ENCODE measurements at regions of chr3 and their contacts with region 1.

Region 1: DNA sequence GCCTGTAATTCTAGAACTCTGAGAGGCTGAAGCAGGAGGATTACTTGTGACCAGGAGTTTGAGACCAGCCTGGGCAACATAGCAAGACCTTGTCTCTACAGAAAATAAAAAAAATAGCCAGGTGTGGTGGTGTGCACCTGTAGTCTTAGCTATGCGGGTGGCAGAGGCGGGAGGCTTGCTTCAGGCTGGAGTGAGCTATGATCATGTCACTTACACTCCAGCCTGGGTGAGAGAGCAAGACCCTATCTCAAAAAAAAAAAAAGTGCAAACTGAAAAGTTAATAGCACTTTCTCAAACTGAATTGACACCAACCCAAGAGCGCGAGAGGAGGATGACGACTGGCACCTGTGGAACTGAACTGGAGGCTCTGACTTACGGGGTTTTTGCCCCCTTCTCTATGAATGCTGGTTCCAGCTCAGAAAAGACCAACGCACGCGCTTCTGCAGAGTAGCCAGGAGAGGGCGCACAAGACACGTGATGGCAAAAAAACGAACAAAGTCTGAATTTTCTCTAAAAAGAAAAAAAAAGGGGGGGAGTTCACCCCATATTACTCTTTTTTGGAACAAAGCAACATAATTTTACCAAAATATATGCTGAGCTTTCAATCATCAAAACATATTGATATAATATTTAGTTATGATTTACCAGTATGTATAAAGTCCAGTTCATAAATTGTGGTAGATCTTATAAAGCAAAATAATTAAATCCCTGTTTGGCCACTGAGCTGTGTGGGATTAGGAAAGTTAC is 23.7 kb downstream of the CFAP92 start:
- DNase-seq: peak in 1 of 2 experiments; percentile 78
- H3K4me3 ChIP-seq: no peak overlapping the region
- H3K27ac ChIP-seq: no peak overlapping the region
- H3K4me1 ChIP-seq: no peaks in the 10 kb centered on the region
- H3K27me3 ChIP-seq: no peaks in the 10 kb centered on the region; a peak in 1 of 7 replicates
- CTCF ChIP-seq: peak; percentile 75 to 84 (median 81)
- EP300 ChIP-seq: no peak
- POLR2A ChIP-seq: no peak
- RAD21 ChIP-seq: peak; percentile 92 to 95

Region 2: GRCh38 chr3:128984596-128984995 is 14.4 kb after region 1 on chr3:
- CTCF ChIA-PET with region 1: interaction called, 51 read pairs
- POLR2A ChIA-PET with region 1: interaction called, 3 read pairs
- DNase-seq: no peak
- H3K4me3 ChIP-seq: no peak overlapping the region
- H3K27ac ChIP-seq: no peak overlapping the region
- H3K4me1 ChIP-seq: peaks cover 0 to 2% (median 0%) of the 10 kb centered on the region in 4 experiments; a peak in 3 of 7 replicates
- H3K27me3 ChIP-seq: no peaks in the 10 kb centered on the region; a peak in 1 of 7 replicates
- CTCF ChIP-seq: no peak
- EP300 ChIP-seq: no peak
- POLR2A ChIP-seq: no peak
- RAD21 ChIP-seq: no peak

Region 3: GRCh38 chr3:129016356-129016719 is 46.2 kb after region 1 on chr3:
- CTCF ChIA-PET with region 1: interaction called, 58 read pairs
- POLR2A ChIA-PET with region 1: interaction called, 7 read pairs
- DNase-seq: no peak
- H3K4me3 ChIP-seq: no peak overlapping the region
- H3K27ac ChIP-seq: no peak overlapping the region
- H3K4me1 ChIP-seq: peaks cover 0 to 7% (median 1%) of the 10 kb centered on the region in 4 experiments; a peak in 2 of 7 replicates
- H3K27me3 ChIP-seq: peaks cover 0 to 4% (median 0%) of the 10 kb centered on the region in 4 experiments; a peak in 1 of 7 replicates
- CTCF ChIP-seq: no peak
- EP300 ChIP-seq: no peak
- POLR2A ChIP-seq: no peak
- RAD21 ChIP-seq: no peak; a peak in 1 of 4 replicates

Region 4: DNA sequence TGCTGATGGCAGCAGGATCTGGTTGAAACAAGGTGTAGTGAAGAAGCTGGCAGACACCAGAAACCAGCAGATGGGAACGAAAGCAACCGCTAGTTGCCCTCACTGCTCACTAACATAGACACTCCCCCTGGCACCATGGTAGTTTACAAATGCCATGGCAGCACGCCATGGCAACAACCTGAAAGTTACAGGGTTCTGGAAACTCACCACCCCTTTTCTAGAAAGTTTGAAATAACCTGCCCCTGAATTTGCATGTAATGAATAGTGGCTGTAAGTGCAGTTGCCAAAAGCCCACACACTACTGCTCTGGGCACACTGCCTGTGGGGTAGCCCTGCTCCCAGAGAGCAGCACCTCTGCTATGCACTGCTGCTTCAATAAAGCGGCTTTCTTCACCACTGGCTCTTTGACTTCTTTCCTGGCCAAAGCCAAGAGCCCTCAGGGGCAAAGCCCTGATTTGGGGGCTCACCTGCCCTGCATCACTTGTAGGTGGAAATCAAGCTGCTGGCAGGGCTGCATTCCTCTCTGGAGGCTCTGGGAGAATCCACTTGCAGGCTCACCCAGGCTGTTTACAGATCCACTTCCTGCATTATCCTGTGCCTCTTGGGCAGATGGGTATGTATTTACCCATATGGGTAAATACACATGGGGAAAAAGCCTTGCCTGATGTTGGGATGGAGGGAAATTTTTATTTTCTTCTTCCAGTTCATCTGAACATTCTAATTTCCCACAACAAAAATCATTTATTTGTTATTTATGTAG is 88.5 kb after region 1 on chr3:
- CTCF ChIA-PET with region 1: interaction called, 79 read pairs
- POLR2A ChIA-PET with region 1: no interaction called
- DNase-seq: no peak
- H3K4me3 ChIP-seq: no peak overlapping the region
- H3K27ac ChIP-seq: no peak overlapping the region
- H3K4me1 ChIP-seq: no peaks in the 10 kb centered on the region; a peak in 1 of 7 replicates
- H3K27me3 ChIP-seq: no peaks in the 10 kb centered on the region
- CTCF ChIP-seq: no peak
- EP300 ChIP-seq: no peak
- POLR2A ChIP-seq: no peak
- RAD21 ChIP-seq: no peak

Region 5: DNA sequence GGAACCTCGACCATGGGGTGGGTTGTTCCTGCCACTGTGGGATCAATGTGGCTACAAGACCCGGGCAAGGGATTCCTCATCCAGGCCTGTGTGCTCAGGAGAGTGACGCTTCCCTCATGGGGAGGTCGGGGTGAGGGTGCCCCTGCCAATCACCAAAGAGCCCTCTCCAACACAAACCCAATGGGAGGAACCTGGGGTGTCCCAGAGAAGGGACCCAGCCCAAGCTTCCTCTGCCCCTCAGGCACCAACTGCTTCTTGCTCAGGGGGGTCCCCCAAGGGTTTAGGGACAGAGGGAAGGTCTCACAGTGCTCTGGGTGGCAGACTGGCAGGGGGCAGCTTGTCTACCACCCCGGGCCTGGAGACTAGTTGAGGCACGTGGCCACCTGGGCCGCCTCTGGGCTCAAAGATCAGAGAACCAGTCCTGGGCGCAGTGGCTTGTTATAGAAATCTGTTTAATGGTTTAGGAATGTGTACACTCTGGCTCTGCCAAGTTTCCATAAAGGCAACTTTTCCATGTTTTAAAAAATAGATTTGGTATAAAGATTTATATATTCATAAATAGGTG is 117.1 kb after region 1 on chr3:
- CTCF ChIA-PET with region 1: interaction called, 18 read pairs
- POLR2A ChIA-PET with region 1: no interaction called
- DNase-seq: no peak
- H3K4me3 ChIP-seq: no peak overlapping the region
- H3K27ac ChIP-seq: no peak overlapping the region
- H3K4me1 ChIP-seq: no peaks in the 10 kb centered on the region
- H3K27me3 ChIP-seq: 0 out of 7 replicates have a peak, but pooled peaks cover 0 to 3% (median 0%) of the 10 kb centered on the region in 4 experiments
- CTCF ChIP-seq: no peak
- EP300 ChIP-seq: no peak
- POLR2A ChIP-seq: no peak
- RAD21 ChIP-seq: no peak

Region 6: GRCh38 chr3:129160891-129161859 is 191.0 kb after region 1 on chr3 and contains the start of gene ISY1:
- CTCF ChIA-PET with region 1: interaction called, 12 read pairs
- POLR2A ChIA-PET with region 1: interaction called, 3 read pairs
- DNase-seq: peak; percentile 67 to 86
- H3K4me3 ChIP-seq: peak within 1 kb of the TSS; percentile 59 to 96 (median 94)
- H3K27ac ChIP-seq: peak within 1 kb of the TSS; percentile 100
- H3K4me1 ChIP-seq: peaks cover 0 to 3% (median 1%) of the 10 kb centered on the region in 4 experiments; a peak in 4 of 7 replicates
- H3K27me3 ChIP-seq: no peaks in the 10 kb centered on the region
- CTCF ChIP-seq: peak; percentile 76 to 86 (median 84)
- EP300 ChIP-seq: no peak
- POLR2A ChIP-seq: peak; percentile 93 to 97
- RAD21 ChIP-seq: peak; percentile 11 to 43; a peak in 2 of 4 replicates
- total RNA-seq, gene ISY1: 16.6 and 21.8 TPM in 2 replicates

Measured in H1 (cell line).